ENCODE measurements at regions of chr3 and their contacts with region 1.

Region 1: GRCh38 chr3:45593708-45594609 is 592 bp upstream of the LIMD1 start:
- DNase-seq: peak; percentile 80
- ATAC-seq: peak; percentile 69
- H3K4me3 Mint-ChIP-seq: peak overlapping the region; percentile 83
- H3K27ac Mint-ChIP-seq: peak overlapping the region; percentile 92
- H3K4me1 Mint-ChIP-seq: peaks cover 58% of the 10 kb centered on the region
- H3K27me3 Mint-ChIP-seq: no peaks in the 10 kb centered on the region
- CTCF ChIP-seq: no peak

Region 2: GRCh38 chr3:45011756-45012508 is 582.0 kb before region 1 on chr3:
- CTCF ChIA-PET with region 1: no interaction called
- POLR2A ChIA-PET with region 1: no interaction called
- intact Hi-C with region 1: loop called (anchors 1 kb)
- DNase-seq: no peak
- ATAC-seq: peak; percentile 77
- H3K4me3 Mint-ChIP-seq: no peak overlapping the region
- H3K27ac Mint-ChIP-seq: no peak overlapping the region
- H3K4me1 Mint-ChIP-seq: peaks cover 20% of the 10 kb centered on the region
- H3K27me3 Mint-ChIP-seq: no peaks in the 10 kb centered on the region
- CTCF ChIP-seq: no peak

Region 3: DNA sequence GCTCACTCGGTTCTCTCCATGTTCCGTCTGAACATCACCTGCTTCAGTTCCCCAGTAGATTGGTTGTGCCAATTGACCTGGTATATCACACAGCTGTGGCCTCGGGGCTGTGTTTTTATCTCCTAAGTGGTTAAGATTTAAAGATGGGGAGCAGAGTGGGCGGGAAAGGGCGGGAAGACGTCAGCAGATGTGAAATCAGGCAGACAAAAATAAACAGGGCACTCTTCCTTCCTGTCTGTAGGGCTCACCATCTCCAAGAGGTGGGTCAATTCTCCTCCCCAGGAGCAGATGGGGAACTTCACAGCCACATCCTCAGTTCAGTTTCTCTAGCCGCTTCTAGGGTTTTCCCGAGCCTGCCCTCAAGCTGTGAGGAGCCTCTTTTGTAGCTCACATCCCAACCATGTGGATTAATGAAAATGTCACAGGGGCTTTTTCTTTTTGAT is 26.2 kb before region 1 on chr3:
- CTCF ChIA-PET with region 1: no interaction called
- POLR2A ChIA-PET with region 1: interaction called, 8 read pairs
- intact Hi-C with region 1: loop called (anchors 1 kb)
- DNase-seq: peak; percentile 21
- ATAC-seq: peak; percentile 61
- H3K4me3 Mint-ChIP-seq: peak overlapping the region; percentile 45
- H3K27ac Mint-ChIP-seq: peak overlapping the region; percentile 80
- H3K4me1 Mint-ChIP-seq: peaks cover 55% of the 10 kb centered on the region
- H3K27me3 Mint-ChIP-seq: no peaks in the 10 kb centered on the region
- CTCF ChIP-seq: no peak

Region 4: GRCh38 chr3:45635477-45636256 is 41.7 kb after region 1 on chr3:
- CTCF ChIA-PET with region 1: interaction called, 3 read pairs
- POLR2A ChIA-PET with region 1: no interaction called
- intact Hi-C with region 1: loop called (anchors 2 kb)
- DNase-seq: no peak
- ATAC-seq: no peak
- H3K4me3 Mint-ChIP-seq: no peak overlapping the region
- H3K27ac Mint-ChIP-seq: peak overlapping the region; percentile 35
- H3K4me1 Mint-ChIP-seq: peaks cover 49% of the 10 kb centered on the region
- H3K27me3 Mint-ChIP-seq: no peaks in the 10 kb centered on the region
- CTCF ChIP-seq: no peak

Region 5: GRCh38 chr3:45688882-45689756 is 95.2 kb after region 1 on chr3 and contains the start of gene SACM1L:
- CTCF ChIA-PET with region 1: no interaction called
- POLR2A ChIA-PET with region 1: interaction called, 9 read pairs
- intact Hi-C with region 1: loop called (anchors 1 kb)
- DNase-seq: peak; percentile 90
- ATAC-seq: peak; percentile 88
- H3K4me3 Mint-ChIP-seq: peak within 1 kb of the TSS; percentile 88
- H3K27ac Mint-ChIP-seq: peak within 1 kb of the TSS; percentile 98
- H3K4me1 Mint-ChIP-seq: peaks cover 61% of the 10 kb centered on the region
- H3K27me3 Mint-ChIP-seq: peaks cover 3% of the 10 kb centered on the region
- CTCF ChIP-seq: no peak
- total RNA-seq, gene SACM1L: 43.1 and 55.5 TPM in 2 replicates

Region 6: DNA sequence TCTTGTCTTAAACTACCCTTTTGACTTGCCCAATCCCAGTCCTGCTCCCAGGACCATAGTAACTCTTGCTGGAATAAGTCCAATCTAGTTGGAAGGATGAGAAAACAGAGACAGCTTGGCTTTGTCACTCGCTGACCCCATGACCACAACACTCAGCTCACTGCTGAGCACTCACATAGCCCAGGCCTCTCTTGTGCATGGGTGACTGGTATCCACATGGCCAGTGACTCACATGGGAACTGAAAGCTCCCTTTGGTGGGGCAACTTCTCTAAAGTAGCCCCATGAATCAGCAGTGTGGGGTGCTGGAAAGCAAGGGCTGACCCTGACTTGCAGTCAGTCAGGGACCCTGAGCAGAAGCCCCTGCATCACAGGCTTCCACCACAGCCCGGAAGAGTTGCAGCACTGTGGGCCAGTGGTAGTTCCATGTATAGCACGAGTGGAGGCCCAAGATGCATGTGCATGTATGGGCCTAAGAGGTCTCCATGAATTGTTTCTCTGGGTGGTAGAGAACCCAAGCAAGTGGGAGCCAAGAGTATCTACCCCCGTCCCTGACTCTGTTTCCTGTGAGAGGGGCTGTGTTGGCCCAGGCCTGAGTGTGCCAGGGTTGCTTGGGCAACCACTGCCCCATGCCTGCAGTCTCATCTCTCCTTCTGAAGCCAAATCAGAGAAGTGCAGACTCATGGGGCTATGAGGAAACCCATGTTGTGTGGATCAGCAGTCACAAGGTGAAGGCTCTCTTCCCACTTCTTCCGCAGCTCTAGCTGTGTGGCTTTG is 495.5 kb after region 1 on chr3:
- CTCF ChIA-PET with region 1: no interaction called
- POLR2A ChIA-PET with region 1: no interaction called
- intact Hi-C with region 1: loop called (anchors 10 kb)
- DNase-seq: no peak
- ATAC-seq: peak; percentile 78
- H3K4me3 Mint-ChIP-seq: no peak overlapping the region
- H3K27ac Mint-ChIP-seq: no peak overlapping the region
- H3K4me1 Mint-ChIP-seq: peaks cover 62% of the 10 kb centered on the region
- H3K27me3 Mint-ChIP-seq: no peaks in the 10 kb centered on the region
- CTCF ChIP-seq: no peak